SK-N-SH (cell line): ENCODE measurements at regions of chr4 and their contacts with region 1.

Region 1: DNA sequence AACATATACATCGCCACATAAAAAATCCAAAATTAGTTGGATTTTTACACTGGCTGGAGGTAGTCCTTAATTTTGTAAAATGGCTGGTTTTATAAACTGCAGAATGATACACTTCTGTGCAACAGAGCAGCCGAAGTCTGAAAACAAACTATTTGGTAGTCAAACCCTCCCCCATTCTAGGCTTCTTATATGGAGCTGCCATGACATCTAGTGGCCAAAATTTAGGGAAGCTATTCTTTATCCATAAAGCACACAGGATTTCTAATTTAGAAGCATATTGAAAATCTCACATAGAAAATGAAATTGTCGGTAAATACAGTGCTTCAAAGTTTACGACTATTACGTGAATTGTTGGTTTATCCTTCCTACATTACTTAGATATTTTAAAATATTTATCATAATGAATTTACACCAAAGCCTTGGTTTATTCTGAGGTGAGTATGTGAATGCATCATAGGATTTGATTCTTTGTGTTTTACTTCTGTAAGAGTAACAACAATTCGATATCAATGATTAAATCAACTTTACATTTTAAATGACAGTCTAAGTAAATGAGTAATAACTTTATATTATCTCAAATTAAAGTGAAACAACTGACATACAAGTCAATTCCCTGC is 113.4 kb upstream of the FAM241A start:
- DNase-seq: peak; percentile 36
- H3K4me3 ChIP-seq: no peak overlapping the region
- H3K27ac ChIP-seq: no peak overlapping the region
- H3K4me1 ChIP-seq: no peaks in the 10 kb centered on the region
- H3K27me3 ChIP-seq: peaks cover 20% of the 10 kb centered on the region; the same call in 1 of the 2 replicates
- CTCF ChIP-seq: peak; percentile 85
- EP300 ChIP-seq: no peak
- RAD21 ChIP-seq: peak; percentile 80

Region 2: DNA sequence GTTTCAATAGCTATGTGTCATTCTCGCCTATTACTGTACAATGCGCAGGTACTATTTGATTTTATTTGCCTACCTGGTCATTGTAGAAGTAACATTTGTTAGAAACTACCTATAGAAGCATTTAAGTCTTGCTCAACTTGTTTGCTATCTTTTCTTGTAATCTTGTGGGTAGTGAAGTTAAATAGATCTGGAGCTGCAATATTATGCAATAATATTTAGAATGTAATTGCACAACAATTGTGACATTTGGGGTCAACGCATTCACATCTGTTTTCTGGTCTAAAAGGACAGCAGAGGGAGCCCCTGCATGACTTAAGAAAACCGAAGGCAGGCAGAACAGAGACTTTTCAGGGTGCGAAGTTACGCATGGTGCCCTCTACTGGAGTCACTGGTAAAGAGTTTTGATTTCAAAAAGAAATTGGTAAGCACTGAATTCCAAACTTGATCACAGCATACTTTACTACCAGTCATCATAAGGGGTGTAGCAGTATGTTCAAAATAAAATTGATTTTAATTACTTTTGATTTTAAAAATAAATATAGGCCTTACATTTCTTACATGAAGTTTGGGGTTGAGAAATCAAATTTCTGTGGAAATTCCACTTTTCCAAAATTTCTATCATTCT is 389.8 kb before region 1 on chr4:
- CTCF ChIA-PET with region 1: interaction called, 21 read pairs
- POLR2A ChIA-PET with region 1: no interaction called
- DNase-seq: peak; percentile 52
- H3K4me3 ChIP-seq: peak overlapping the region in 1 of 2 experiments; percentile 52; a peak in 1 of 4 replicates
- H3K27ac ChIP-seq: no peak overlapping the region
- H3K4me1 ChIP-seq: no peaks in the 10 kb centered on the region
- H3K27me3 ChIP-seq: peaks cover 4% of the 10 kb centered on the region; the same call in 1 of the 2 replicates
- CTCF ChIP-seq: peak; percentile 96
- EP300 ChIP-seq: no peak
- RAD21 ChIP-seq: peak; percentile 80

Region 3: DNA sequence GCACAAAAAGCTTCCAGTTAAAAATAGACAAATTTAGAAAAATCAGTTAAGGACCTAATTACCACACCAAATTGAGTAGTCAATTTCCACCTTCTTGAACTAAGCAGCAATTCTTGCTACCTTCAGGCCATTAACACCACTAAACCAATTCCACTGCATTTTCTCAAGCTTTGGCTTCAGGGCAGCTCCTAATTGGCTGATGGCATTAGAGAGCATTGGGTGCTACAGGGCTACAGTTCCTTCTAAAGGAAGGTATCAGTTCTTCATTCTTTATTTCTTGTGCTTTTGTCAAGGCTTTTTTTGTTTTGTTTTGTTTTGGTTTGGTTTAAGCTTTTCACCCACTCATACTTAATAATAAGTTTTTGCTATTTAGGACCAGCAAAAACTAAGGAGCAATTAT is 23.3 kb after region 1 on chr4:
- CTCF ChIA-PET with region 1: interaction called, 12 read pairs
- POLR2A ChIA-PET with region 1: no interaction called
- DNase-seq: no peak
- H3K4me3 ChIP-seq: no peak overlapping the region
- H3K27ac ChIP-seq: no peak overlapping the region
- H3K4me1 ChIP-seq: no peaks in the 10 kb centered on the region
- H3K27me3 ChIP-seq: peaks cover 7% of the 10 kb centered on the region; the same call in 1 of the 2 replicates
- CTCF ChIP-seq: no peak
- EP300 ChIP-seq: no peak
- RAD21 ChIP-seq: no peak